CD14-positive monocyte (primary cell): ENCODE measurements at regions of chr6 and their contacts with region 1.

Region 1: GRCh38 chr6:32129297-32130088 is 595 bp downstream of the FKBPL start:
- DNase-seq: no peak
- H3K4me3 ChIP-seq: peak overlapping the region; percentile 56 to 100 (median 71)
- H3K4me3 Mint-ChIP-seq: peak overlapping the region; percentile 88 to 90
- H3K27ac ChIP-seq: peak overlapping the region; percentile 21 to 98
- H3K27ac Mint-ChIP-seq: peak overlapping the region; percentile 90 to 98 (median 95)
- H3K4me1 ChIP-seq: peaks cover 30 to 36% of the 10 kb centered on the region in 2 donors
- H3K4me1 Mint-ChIP-seq: peaks cover 28% of the 10 kb centered on the region
- H3K27me3 ChIP-seq: no peaks in the 10 kb centered on the region
- H3K27me3 Mint-ChIP-seq: peaks cover 3 to 5% (median 4%) of the 10 kb centered on the region in 3 donors
- CTCF ChIP-seq: no peak

Region 2: GRCh38 chr6:32190054-32190851 is 60.8 kb after region 1 on chr6 and contains the start of gene PBX2:
- intact Hi-C with region 1: loop called (anchors 2 to 5 kb)
- DNase-seq: peak; percentile 91 to 94 (median 92)
- H3K4me3 ChIP-seq: peak within 1 kb of the TSS; percentile 74 to 98 (median 81)
- H3K4me3 Mint-ChIP-seq: peak within 1 kb of the TSS; percentile 96 to 98
- H3K27ac ChIP-seq: peak within 1 kb of the TSS; percentile 89 to 95
- H3K27ac Mint-ChIP-seq: peak within 1 kb of the TSS; percentile 96 to 99 (median 98)
- H3K4me1 ChIP-seq: peaks cover 73 to 82% of the 10 kb centered on the region in 2 donors
- H3K4me1 Mint-ChIP-seq: peaks cover 77% of the 10 kb centered on the region
- H3K27me3 ChIP-seq: no peaks in the 10 kb centered on the region
- H3K27me3 Mint-ChIP-seq: peaks cover 0 to 3% (median 2%) of the 10 kb centered on the region in 3 donors
- CTCF ChIP-seq: no peak
- polyA plus RNA-seq, gene PBX2: 1.9 to 201 (median 4.0) TPM

Region 3: GRCh38 chr6:32195652-32195901 is 66.1 kb after region 1 on chr6:
- intact Hi-C with region 1: loop called (anchors 2 to 5 kb)
- DNase-seq: peak; percentile 100
- H3K4me3 ChIP-seq: peak overlapping the region in 2 of 3 experiments; percentile 46 to 98
- H3K4me3 Mint-ChIP-seq: peak overlapping the region in 1 of 2 donors; percentile 84
- H3K27ac ChIP-seq: peak overlapping the region; percentile 98 to 99
- H3K27ac Mint-ChIP-seq: peak overlapping the region; percentile 98 to 100 (median 100)
- H3K4me1 ChIP-seq: peaks cover 53 to 62% of the 10 kb centered on the region in 2 donors
- H3K4me1 Mint-ChIP-seq: peaks cover 56% of the 10 kb centered on the region
- H3K27me3 ChIP-seq: no peaks in the 10 kb centered on the region
- H3K27me3 Mint-ChIP-seq: peaks cover 0 to 10% (median 2%) of the 10 kb centered on the region in 3 donors
- CTCF ChIP-seq: no peak